Dorsolateral prefrontal cortex (tissue), 120 donors: ENCODE measurements at regions of chr6 and their contacts with region 1.

Region 1: GRCh38 chr6:133040094-133040802 is 200.9 kb upstream of the EYA4 start:
- DNase-seq: no peak
- H3K4me3 ChIP-seq: no peak overlapping the region
- H3K27ac ChIP-seq: no peak overlapping the region
- H3K27me3 ChIP-seq: no peaks in the 10 kb centered on the region
- CTCF ChIP-seq: peak; percentile 18 to 67 (median 49)

Region 2: DNA sequence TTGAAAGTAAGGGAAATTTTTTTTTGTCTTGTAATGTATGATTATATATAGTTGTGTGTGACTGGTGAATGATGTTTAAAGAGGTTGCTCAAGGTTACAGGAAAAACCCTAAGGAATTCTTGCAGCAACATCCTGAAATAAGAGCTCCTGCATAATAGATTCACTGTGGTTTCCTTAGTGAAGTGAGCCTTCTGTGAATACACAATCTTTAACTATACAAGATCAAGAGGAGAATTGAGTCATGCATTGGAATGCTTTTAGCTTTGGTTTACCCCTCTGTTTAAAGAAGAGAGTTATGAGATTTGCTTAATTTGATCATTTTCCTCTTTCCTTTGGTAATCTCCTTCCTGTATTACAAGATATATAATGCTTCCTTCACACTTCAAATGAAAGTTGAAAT is 59.3 kb after region 1 on chr6:
- intact Hi-C with region 1: loop called in 1 of 2 experiments (anchors 10 kb)
- DNase-seq: no peak
- H3K4me3 ChIP-seq: no peak overlapping the region
- H3K27ac ChIP-seq: no peak overlapping the region
- H3K27me3 ChIP-seq: no peaks in the 10 kb centered on the region
- CTCF ChIP-seq: no peak